ENCODE measurements at regions of chr7 and their contacts with region 1.

Region 1: DNA sequence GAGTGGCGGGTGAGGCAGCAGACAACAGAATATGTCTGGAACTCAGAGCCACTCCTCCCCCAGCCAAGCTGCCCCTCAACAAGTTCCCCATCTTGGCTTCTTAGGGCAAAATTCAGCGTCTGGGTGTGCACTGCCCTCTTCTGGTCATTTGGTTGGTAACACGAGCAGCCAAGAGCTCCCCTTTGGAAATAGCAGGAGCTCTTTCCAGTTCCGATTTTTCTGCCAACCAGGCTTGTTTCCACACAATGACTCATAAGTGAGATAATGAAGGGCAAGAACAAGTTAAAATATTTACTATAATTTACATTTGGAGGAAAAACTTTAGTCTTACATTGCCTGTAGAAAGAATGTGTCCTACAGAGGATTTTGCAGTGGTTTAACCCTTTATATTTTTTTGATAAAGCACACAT is 70.5 kb downstream of the ADCYAP1R1 start:
- DNase-seq: peak; percentile 82 to 90 (median 84)
- H3K4me3 ChIP-seq: no peak overlapping the region
- H3K27ac ChIP-seq: no peak overlapping the region
- H3K4me1 ChIP-seq: no peaks in the 10 kb centered on the region
- H3K27me3 ChIP-seq: peaks cover 0 to 6% (median 0%) of the 10 kb centered on the region in 5 experiments

Region 2: DNA sequence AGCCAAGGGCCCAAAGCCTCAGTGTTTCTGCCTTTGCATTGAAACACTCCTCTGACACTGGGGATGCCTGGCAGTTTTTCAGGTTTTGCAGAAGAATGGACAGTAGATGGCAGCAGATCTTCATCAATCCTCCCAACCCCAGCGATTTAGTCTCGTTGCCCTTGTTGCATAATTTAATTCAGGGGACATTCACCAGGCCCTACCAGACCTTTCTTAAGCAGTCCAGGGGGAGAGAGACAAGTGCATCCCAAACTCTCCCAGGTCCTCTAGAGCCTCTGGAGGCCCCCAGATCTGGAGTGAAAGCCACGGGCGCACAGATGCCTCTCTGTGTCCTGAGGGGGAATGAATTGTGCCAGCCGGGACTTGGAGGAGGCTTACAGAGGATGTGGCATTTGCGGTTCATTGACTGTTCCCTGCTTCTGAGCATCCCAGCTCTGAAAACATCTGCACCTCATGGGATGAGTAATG is 321.8 kb before region 1 on chr7:
- CTCF ChIA-PET with region 1: interaction called, 12 read pairs
- POLR2A ChIA-PET with region 1: no interaction called
- DNase-seq: peak; percentile 48 to 80 (median 75)
- H3K4me3 ChIP-seq: no peak overlapping the region
- H3K27ac ChIP-seq: no peak overlapping the region
- H3K4me1 ChIP-seq: peaks cover 0 to 13% (median 7%) of the 10 kb centered on the region in 4 experiments
- H3K27me3 ChIP-seq: no peaks in the 10 kb centered on the region

Region 3: DNA sequence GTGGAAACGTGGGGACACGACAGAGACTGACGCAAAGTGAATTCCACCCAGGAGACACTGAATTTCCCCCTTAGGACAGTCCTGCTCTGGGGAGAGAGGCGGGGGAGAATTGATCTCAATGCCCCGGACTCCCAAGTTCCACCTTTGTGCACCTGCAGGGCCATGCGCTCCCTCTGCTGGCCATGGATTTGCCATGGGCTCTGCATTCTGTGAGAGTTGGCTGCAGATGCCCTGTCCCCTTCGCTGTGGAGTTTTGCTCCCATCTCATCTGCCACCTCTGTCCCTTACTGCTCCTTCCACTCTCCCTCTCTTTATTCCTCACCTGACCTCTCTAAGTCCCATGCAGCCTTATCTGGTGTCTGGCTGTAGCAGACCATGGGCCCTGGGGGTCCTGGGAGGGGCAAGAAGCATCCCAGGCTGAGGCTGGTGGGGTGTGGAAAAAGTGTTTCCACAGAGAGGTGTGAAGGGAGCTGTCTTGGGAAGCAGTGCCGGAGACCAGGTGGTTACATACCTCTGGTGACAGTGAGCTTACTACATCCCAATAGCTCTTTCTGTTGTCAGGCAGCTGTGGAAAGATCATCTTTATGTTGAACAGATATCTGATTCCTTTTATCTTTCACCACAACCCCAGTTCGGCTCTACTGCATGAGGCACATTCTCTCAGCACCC is 144.6 kb before region 1 on chr7:
- CTCF ChIA-PET with region 1: interaction called, 210 read pairs
- POLR2A ChIA-PET with region 1: no interaction called
- DNase-seq: peak; percentile 32 to 50 (median 40)
- H3K4me3 ChIP-seq: no peak overlapping the region
- H3K27ac ChIP-seq: no peak overlapping the region
- H3K4me1 ChIP-seq: peaks cover 0 to 8% (median 2%) of the 10 kb centered on the region in 4 experiments
- H3K27me3 ChIP-seq: peaks cover 0 to 17% (median 6%) of the 10 kb centered on the region in 5 experiments

Region 4: GRCh38 chr7:30983042-30983913 is 139.4 kb before region 1 on chr7:
- CTCF ChIA-PET with region 1: interaction called, 210 read pairs
- POLR2A ChIA-PET with region 1: no interaction called
- DNase-seq: peak; percentile 65 to 86 (median 77)
- H3K4me3 ChIP-seq: no peak overlapping the region
- H3K27ac ChIP-seq: no peak overlapping the region
- H3K4me1 ChIP-seq: peaks cover 0 to 7% (median 2%) of the 10 kb centered on the region in 4 experiments
- H3K27me3 ChIP-seq: peaks cover 0 to 60% (median 19%) of the 10 kb centered on the region in 5 experiments

Region 5: DNA sequence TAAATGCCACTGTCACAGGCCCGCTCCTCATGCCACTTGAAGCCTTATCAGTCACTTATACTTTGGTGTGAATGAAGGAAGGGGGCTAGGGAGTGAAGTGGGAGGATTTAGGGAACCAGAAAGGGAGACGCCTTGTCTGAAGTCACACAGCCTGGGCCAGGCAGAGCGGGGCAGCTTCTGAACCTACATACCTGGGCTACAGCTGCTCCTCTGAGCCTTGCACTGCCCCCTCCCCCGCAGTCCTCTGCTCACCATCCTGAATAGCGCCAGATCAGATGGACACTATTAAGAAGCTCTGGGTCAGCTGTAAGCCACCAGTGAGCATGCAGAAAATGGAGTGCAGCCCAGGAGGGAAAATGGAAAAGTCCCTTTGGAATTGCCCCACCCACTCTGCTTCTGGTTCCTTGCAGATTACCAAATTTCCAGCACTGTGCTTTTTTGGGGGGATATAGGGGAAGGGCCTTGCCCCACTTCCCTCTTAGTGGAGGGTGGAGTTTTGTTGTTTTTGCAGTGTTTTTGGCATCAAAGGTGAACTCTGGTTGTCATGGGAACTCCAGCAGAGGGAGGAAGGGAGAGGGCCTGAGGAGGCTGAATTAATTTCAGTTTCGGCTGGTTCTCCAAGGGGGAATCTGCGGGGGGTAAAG is 105.5 kb before region 1 on chr7:
- CTCF ChIA-PET with region 1: no interaction called
- POLR2A ChIA-PET with region 1: no interaction called
- DNase-seq: no peak
- H3K4me3 ChIP-seq: no peak overlapping the region
- H3K27ac ChIP-seq: no peak overlapping the region
- H3K4me1 ChIP-seq: peaks cover 0 to 25% (median 4%) of the 10 kb centered on the region in 4 experiments
- H3K27me3 ChIP-seq: no peaks in the 10 kb centered on the region

Region 6: DNA sequence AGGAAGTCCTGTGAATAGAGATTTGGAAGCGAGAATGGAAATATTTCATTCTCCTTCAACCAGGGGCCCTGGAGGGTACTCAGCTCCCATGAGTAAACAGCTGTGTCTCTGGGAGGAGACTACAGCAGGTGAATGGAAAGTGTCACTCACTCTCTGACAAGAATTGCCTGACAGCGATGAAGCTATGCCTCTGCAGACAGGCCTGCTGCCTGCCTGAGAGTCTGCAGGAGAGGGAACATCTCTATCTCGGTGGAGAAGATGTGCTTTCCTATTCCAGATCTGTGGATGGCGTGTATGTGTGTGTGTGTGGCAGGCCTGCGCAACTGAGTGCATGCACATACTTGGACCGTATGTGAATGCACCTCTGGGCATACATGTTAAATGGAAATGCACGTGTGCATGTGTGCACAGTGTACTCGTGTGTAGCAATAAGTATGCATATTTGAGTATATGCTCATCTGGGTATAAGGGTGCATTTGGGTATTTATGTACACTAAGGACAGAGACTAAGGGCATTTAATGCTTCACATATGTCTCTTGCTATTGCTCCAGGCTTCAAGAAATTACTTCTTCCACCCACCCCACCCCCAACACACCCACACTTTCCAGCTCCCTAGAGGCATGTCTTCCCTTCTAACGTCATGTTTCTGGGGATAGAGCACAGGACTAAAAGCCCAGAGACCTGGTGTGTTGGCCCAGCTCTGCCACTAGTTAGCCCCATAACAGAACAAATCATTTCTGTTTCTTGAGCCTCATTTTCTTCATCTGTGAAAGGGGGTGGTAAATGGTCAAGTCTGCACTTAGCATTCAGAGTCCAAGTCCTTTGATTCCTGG is 75.1 kb before region 1 on chr7:
- CTCF ChIA-PET with region 1: no interaction called
- POLR2A ChIA-PET with region 1: no interaction called
- DNase-seq: no peak
- H3K4me3 ChIP-seq: no peak overlapping the region
- H3K27ac ChIP-seq: no peak overlapping the region
- H3K4me1 ChIP-seq: peaks cover 0 to 4% (median 2%) of the 10 kb centered on the region in 4 experiments
- H3K27me3 ChIP-seq: peaks cover 1 to 61% (median 29%) of the 10 kb centered on the region in 5 experiments

Region 7: DNA sequence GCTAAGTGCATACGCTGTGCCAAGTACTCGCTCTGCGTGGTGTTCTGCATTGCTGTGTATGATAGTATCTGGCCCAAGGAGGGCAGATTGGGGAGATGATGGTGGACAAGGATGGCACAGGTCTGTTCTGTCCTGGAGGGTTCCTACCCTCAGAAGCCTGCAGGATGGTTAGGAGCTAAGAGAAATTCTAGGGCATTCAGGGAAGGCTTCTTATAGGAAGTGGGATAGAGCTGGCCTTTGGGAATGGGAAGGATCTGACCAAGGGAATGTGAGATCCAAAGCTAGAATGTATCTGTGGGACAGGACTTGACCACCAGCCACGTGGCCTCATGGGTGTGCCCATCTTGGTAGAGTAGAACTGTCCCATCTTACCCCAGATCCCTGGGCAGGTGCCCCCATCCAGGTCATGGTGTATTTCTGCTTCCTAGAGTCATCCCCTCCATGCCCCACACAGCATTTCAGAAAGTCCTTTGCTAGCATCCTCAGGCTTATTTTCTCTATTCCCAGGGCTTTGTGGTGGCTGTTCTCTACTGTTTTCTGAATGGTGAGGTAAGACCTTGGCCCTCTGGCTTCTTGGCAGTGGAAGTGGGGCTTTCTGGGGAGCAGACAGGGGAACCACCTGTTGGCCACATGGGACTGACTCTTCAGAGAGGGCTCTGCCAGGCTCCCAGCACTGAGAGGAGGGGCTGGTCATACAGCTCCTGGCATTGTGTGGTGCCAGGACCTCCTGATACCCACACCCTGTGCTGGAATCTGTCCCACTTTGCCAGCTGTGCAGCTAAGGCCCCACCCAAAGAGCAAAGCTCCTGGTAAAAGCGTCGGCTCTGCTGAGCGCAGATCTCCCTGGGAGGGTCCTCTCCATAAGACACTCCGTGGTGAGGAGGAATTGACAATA is 18.0 kb before region 1 on chr7:
- CTCF ChIA-PET with region 1: interaction called, 12 read pairs
- POLR2A ChIA-PET with region 1: no interaction called
- DNase-seq: no peak
- H3K4me3 ChIP-seq: no peak overlapping the region
- H3K27ac ChIP-seq: no peak overlapping the region
- H3K4me1 ChIP-seq: no peaks in the 10 kb centered on the region
- H3K27me3 ChIP-seq: peaks cover 0 to 10% (median 0%) of the 10 kb centered on the region in 5 experiments

Region 8: DNA sequence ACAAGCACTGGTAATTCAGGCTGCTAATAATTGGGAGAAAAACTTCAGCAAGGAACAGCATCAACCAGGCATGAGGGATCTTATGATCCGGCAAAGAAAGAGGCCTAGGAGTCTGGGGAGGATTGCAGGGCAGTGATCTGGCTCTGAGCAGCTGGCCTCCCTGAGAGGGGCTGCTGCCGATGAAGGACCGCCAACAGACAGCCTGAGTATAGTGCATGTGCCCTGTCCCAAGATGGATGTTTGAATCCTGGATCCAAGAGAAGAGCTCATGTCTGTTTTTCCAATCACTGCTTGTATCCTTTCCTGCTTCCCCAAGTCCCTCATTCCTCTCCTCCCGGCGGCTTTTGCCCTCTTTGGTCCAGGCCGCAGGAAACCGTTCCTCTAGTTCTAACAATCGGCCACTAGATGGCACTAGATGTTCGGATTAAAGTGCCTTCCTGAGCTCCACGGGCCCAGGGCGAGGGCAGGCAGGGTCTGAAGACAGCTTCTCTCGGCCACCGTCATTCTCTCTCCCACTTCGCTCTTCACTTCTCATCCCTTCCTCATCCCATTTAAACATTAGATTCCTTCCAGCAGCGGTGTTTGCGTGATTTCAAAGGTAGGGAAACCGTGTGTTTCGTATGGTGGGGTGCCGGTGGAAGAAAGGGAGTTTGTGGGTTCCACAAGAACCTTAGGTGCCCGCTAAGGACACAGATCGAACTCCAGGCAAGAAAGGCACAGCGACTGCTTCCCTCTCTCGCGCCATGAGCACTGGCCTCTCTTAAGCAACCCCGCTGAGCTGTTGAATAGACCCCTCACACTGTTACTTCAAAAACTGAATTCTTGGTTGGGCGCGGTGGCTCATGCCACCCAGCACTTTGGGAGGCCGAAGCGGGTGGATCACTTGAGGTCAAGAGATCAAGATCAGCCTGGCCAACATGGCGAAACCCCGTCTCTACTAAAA is 11.9 kb after region 1 on chr7:
- CTCF ChIA-PET with region 1: interaction called, 69 read pairs
- POLR2A ChIA-PET with region 1: no interaction called
- DNase-seq: peak; percentile 50 to 71 (median 64)
- H3K4me3 ChIP-seq: no peak overlapping the region
- H3K27ac ChIP-seq: no peak overlapping the region
- H3K4me1 ChIP-seq: no peaks in the 10 kb centered on the region
- H3K27me3 ChIP-seq: peaks cover 0 to 2% (median 0%) of the 10 kb centered on the region in 5 experiments

Region 9: DNA sequence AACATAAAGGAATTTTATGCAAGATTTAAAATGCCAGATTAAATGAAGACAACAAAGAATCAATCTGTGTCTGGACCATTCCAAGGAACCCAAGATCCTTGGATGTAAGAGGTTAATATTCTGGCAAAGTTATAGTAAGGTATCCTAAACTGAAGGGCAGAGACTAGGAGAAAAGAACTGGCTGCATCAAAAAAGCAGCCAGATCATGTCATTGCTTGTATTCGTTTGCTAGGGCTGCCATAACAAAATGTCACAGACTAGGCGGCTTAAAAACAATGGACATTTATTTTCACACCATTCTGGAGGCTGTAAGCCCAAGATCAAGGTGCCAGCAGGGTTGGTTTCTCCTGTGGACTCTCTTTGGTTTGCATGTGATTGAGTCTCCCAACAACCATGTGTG is 29.2 kb after region 1 on chr7:
- CTCF ChIA-PET with region 1: no interaction called
- POLR2A ChIA-PET with region 1: no interaction called
- DNase-seq: no peak
- H3K4me3 ChIP-seq: no peak overlapping the region
- H3K27ac ChIP-seq: no peak overlapping the region
- H3K4me1 ChIP-seq: no peaks in the 10 kb centered on the region
- H3K27me3 ChIP-seq: no peaks in the 10 kb centered on the region

Region 10: DNA sequence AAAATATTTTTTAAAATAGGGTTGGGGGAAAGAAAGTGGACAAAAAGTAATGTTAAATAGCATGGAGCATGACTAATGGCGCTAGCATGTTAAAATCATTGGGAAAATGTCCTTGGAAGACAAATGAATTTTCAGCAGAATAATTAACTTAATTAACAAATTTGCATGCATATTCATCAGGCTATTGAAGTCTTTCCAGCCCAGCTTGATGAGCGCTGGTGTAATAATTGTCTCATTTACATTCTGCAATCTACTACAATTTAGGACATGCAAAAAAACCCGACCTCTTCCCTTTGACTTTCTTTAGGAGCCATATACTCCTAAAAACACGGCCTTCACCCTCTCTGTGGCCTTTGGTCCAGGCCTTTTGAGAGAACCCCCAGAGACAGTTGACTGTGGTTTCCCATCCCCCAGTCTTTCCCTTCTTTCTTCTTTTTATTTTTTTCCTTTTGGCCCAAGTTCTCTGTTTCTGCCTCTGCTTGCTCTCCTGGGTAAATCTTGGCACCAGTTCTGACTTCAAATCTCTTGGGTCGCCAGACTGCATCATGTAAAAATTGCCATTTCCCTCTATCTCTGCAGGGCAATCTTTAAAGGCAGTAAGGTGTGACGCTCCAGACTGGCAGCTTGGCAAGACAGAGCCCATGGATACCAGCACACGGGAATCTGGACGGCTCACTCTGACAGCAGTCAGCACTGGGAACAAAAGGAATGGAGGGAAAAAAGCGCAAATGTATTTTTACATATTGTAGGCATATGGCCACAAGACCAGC is 112.4 kb after region 1 on chr7:
- CTCF ChIA-PET with region 1: no interaction called
- POLR2A ChIA-PET with region 1: no interaction called
- DNase-seq: no peak
- H3K4me3 ChIP-seq: no peak overlapping the region
- H3K27ac ChIP-seq: no peak overlapping the region
- H3K4me1 ChIP-seq: no peaks in the 10 kb centered on the region
- H3K27me3 ChIP-seq: no peaks in the 10 kb centered on the region

Measured in common myeloid progenitor, CD34-positive (primary cell).